ENCODE measurements at regions of chr19 and their contacts with region 1.

Region 1: DNA sequence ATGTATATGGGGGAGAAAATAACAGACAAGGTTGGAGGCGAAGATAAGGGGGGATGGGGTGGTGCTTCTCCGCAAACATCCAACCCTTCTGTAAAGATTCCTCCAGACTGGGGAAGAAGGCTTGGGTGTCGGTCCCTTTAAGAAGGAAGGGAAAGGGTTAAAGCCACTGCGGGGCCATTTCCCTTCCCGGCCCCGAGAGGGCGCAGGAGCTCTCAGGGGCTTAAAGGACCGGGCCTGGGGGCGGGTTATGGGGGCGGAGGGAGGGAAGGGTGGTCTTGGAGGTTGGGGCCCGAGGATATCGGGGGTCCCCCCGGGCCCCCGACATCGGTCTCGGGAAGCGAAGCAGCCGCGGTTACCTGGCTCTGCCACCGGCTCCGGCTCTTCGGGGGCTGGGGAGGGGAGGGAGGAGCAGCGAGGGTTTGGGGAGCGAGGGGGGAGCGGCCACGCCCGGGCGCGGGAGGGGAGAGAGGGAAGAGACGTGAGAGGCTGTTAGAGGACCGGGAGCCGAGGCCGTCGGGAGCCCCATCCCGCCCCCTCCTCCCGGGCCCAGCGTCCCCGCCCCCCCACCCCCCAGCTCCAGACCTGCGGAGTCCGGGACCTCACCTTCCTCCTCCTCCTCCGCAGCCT is 2.8 kb downstream of the TNNT1 start:
- DNase-seq: no peak
- ATAC-seq: no peak
- H3K4me3 ChIP-seq: no peak overlapping the region
- H3K27ac ChIP-seq: no peak overlapping the region
- H3K4me1 ChIP-seq: no peaks in the 10 kb centered on the region
- H3K27me3 ChIP-seq: no peaks in the 10 kb centered on the region

Region 2: DNA sequence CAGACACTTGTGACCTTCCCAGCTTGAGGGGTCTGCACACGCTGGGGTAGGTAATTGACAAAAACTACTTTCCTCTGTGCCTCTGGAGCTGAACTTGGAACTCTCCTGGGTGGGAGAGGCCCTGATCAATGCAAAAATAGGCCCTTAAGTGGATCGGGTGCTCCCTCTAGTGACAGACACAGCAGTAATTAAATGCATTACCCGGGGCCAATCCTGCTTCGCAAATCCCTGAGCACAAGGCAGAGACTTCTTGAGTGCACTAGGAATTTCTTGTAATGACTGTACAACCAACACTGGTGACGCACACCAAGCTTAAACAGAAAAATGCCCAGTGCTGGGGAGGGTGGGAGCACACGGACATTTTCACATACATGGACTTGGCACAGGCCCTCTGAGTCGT is 272.0 kb after region 1 on chr19:
- intact Hi-C with region 1: loop called (anchors 2 to 10 kb)
- DNase-seq: no peak
- ATAC-seq: peak; percentile 74
- H3K4me3 ChIP-seq: no peak overlapping the region
- H3K27ac ChIP-seq: no peak overlapping the region
- H3K4me1 ChIP-seq: no peaks in the 10 kb centered on the region
- H3K27me3 ChIP-seq: no peaks in the 10 kb centered on the region

Region 3: GRCh38 chr19:55503502-55504251 is 357.5 kb after region 1 on chr19:
- intact Hi-C with region 1: loop called (anchors 2 to 5 kb)
- DNase-seq: peak; percentile 96 to 98
- ATAC-seq: peak; percentile 98
- H3K4me3 ChIP-seq: peak overlapping the region in 1 of 2 donors; percentile 7
- H3K27ac ChIP-seq: no peak overlapping the region
- H3K4me1 ChIP-seq: no peaks in the 10 kb centered on the region
- H3K27me3 ChIP-seq: no peaks in the 10 kb centered on the region

Measured in aorta (tissue), 5 donors.